GM12878 (cell line): ENCODE measurements at regions of chr3 and their contacts with region 1.

Region 1: DNA sequence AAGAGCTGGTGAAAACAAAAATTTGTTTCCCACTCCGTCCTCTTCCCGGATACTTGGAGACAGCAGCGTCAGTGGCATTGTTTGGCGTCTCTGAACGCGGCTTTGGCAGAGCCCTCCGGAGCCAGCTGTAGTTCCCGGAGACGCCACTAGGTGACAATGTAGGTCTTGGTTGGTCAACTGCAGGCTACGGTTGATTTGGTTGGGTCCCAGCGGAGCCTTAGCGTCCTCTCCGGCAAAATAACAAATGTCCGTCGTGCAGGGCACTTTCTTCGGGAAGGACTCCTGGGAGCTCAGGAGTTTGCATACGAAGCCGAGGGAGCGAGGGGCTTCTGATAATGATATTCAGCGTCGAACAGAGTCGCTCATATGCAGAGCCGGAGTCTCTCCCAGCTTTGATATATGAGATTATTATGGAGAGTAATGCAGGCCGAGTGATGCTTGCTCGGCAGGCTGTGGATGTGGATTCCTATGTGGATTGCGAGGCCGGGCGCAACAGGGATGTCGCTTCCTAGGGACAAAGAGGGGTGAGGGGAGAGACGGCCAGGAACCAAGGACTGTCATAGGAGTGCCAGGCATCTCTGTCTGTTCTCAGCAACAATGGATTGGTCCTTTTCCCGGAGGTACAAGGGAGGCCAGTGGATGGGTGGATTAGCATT is 74.8 kb downstream of the IL20RB start:
- DNase-seq: peak; percentile 13
- ATAC-seq: peak; percentile 97
- H3K4me3 ChIP-seq: peak overlapping the region; percentile 22; the same call in 1 of the 2 replicates
- H3K27ac ChIP-seq: no peak overlapping the region
- H3K4me1 ChIP-seq: no peaks in the 10 kb centered on the region
- H3K27me3 ChIP-seq: no peaks in the 10 kb centered on the region
- CTCF ChIP-seq: peak; percentile 96 to 100 (median 99)
- EP300 ChIP-seq: no peak
- POLR2A ChIP-seq: no peak
- RAD21 ChIP-seq: peak; percentile 95

Region 2: GRCh38 chr3:137792626-137793271 is 760.2 kb after region 1 on chr3:
- CTCF ChIA-PET with region 1: interaction called, 3 read pairs
- POLR2A ChIA-PET with region 1: no interaction called
- RAD21 ChIA-PET with region 1: no interaction called
- SMC1A ChIA-PET with region 1: no interaction called
- in situ Hi-C with region 1: no loop called
- intact Hi-C with region 1: loop called (anchors 2 kb)
- DNase-seq: no peak
- ATAC-seq: 0 out of 3 replicates have a peak, but pooled peaks have one; percentile 27
- H3K4me3 ChIP-seq: no peak overlapping the region
- H3K27ac ChIP-seq: no peak overlapping the region
- H3K4me1 ChIP-seq: no peaks in the 10 kb centered on the region
- H3K27me3 ChIP-seq: no peaks in the 10 kb centered on the region; a peak in 1 of 4 replicates
- CTCF ChIP-seq: peak; percentile 42 to 74 (median 71)
- EP300 ChIP-seq: no peak
- POLR2A ChIP-seq: no peak
- RAD21 ChIP-seq: peak; percentile 84